Activated CD8-positive, alpha-beta T cell treated with anti-CD3 and anti-CD28 coated beads for 36 hours (primary cell): ENCODE measurements at regions of chr4 and their contacts with region 1.

Region 1: GRCh38 chr4:123564758-123565346 is 168.3 kb downstream of the SPRY1 start:
- DNase-seq: peak; percentile 71
- ATAC-seq: peak; percentile 100
- H3K4me3 Mint-ChIP-seq: no peak overlapping the region
- H3K27ac Mint-ChIP-seq: no peak overlapping the region
- H3K4me1 Mint-ChIP-seq: peaks cover 6% of the 10 kb centered on the region
- H3K27me3 Mint-ChIP-seq: no peaks in the 10 kb centered on the region
- CTCF ChIP-seq: peak; percentile 89

Region 2: DNA sequence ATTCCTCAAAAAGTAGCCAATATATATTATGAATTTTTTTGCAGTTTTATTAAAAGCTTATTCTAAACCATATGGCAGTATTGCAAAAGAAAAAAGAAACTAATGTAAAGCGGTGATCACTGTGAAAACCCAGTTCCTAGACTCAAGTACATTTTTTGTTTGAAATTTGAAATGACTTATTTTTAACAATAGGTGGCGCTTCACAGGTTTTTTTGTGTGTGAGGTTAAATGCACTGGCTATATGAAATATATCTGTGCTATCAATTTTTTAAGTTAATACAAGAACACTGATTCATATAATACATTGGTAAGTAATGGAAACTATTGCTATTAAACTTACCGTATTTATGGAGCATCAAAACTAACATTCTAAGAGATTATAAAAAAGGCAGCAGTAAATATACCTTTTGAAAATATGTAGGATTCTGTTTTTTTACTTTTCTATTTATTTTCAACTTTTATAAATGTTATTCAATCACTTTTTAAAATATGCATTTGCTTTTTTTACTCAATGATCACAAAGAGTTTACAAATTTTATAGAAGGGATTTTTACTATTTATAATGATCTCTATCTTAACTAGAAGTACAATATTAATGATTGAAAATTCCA is 173.9 kb before region 1 on chr4:
- CTCF ChIA-PET with region 1: interaction called, 42 read pairs
- POLR2A ChIA-PET with region 1: interaction called, 3 read pairs
- intact Hi-C with region 1: no loop called
- DNase-seq: no peak
- ATAC-seq: peak; percentile 61
- H3K4me3 Mint-ChIP-seq: no peak overlapping the region
- H3K27ac Mint-ChIP-seq: no peak overlapping the region
- H3K4me1 Mint-ChIP-seq: peaks cover 11% of the 10 kb centered on the region
- H3K27me3 Mint-ChIP-seq: peaks cover 2% of the 10 kb centered on the region
- CTCF ChIP-seq: peak; percentile 78

Region 3: GRCh38 chr4:123528501-123529277 is 36.2 kb before region 1 on chr4:
- CTCF ChIA-PET with region 1: interaction called, 18 read pairs
- POLR2A ChIA-PET with region 1: no interaction called
- intact Hi-C with region 1: no loop called
- DNase-seq: no peak
- ATAC-seq: no peak
- H3K4me3 Mint-ChIP-seq: no peak overlapping the region
- H3K27ac Mint-ChIP-seq: no peak overlapping the region
- H3K4me1 Mint-ChIP-seq: peaks cover 30% of the 10 kb centered on the region
- H3K27me3 Mint-ChIP-seq: no peaks in the 10 kb centered on the region
- CTCF ChIP-seq: no peak

Region 4: DNA sequence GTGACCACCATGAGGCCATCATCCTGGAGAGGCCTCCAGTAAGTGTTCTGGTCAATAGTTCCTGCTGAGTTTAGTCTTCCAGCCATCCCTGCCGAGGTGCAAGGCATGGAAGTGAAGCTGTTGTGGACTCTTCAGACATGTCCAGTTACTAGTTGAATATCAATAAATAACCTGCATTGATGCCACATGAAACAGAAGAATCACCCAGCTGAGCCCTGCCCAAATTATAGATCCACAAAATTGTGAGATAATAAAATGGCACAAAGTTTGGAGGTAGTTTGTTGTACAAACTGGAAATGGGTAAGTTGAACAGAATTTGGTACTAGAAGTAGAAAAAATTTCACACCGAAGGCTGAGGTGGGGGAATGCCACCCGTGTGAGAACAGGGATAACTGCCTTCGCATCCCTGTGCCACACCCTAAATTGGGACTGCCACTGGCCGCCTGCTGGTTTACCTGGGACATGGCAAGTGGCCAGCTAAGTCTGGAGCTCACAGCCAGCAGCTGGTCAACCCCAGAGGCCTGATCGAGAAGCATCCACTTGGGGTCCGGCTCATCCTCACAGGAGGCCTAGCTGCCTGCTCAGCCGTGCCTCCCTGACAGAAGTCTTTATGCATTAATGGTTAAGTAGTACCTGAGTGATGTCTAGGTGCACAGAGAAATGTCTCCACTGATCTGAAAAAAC is 16.3 kb after region 1 on chr4:
- CTCF ChIA-PET with region 1: interaction called, 27 read pairs
- POLR2A ChIA-PET with region 1: no interaction called
- intact Hi-C with region 1: no loop called
- DNase-seq: no peak
- ATAC-seq: no peak
- H3K4me3 Mint-ChIP-seq: no peak overlapping the region
- H3K27ac Mint-ChIP-seq: no peak overlapping the region
- H3K4me1 Mint-ChIP-seq: no peaks in the 10 kb centered on the region
- H3K27me3 Mint-ChIP-seq: no peaks in the 10 kb centered on the region
- CTCF ChIP-seq: no peak

Region 5: DNA sequence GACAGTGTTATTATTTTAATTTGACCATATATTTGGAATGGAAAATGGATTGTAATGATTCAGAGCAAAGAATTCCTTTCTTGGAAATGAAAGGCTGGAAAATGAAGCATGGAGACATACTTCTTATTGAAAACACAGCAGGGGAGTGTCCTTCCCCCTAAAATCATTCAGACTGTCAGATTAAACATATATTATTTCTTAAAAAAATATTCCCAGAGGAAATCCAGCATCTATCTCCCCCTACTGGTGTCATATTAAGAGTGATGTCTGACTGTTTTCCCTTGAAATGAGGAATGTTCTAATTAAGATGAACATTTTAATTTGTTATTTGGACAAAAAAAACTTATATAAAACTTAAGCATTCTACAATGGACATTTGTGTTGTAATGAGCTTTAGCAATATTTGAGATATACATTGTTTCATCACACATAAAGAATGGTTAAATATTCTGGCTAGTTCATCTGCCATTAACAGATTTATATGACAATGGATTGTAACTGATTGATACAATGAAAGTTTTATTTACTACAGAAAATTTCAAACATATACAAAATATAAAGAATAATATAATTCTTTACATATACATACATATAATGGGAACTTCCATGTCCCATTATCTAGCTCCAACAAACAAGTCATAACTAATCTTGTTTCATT is 96.4 kb after region 1 on chr4:
- CTCF ChIA-PET with region 1: interaction called, 31 read pairs
- POLR2A ChIA-PET with region 1: no interaction called
- intact Hi-C with region 1: no loop called
- DNase-seq: no peak
- ATAC-seq: no peak
- H3K4me3 Mint-ChIP-seq: no peak overlapping the region
- H3K27ac Mint-ChIP-seq: no peak overlapping the region
- H3K4me1 Mint-ChIP-seq: peaks cover 15% of the 10 kb centered on the region
- H3K27me3 Mint-ChIP-seq: peaks cover 2% of the 10 kb centered on the region
- CTCF ChIP-seq: peak; percentile 51